ENCODE measurements at regions of chr11 and their contacts with region 1.

Region 1: DNA sequence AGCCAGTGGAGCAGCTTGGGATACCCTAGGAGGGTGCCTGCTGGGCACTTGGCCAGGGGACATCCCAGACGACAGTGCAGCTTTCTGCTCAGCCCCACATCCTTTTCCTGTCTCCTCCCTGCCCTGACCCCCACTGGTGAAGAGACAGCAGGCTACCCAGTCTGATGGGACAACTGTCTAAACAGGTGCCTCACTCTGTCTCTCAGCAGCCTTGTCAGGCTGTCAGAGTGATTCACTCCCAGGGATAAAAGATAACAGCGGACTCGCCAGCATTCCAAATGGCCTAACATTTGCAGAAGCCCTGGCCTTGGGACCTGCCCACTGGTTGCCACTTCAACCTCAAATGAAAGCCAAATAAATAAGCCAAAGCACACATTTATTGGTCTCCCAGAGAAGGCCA is 318.6 kb upstream of the PLET1 start:
- DNase-seq: no peak
- H3K4me3 ChIP-seq: no peak overlapping the region
- H3K4me3 Mint-ChIP-seq: no peak overlapping the region
- H3K27ac Mint-ChIP-seq: no peak overlapping the region
- H3K4me1 ChIP-seq: no peaks in the 10 kb centered on the region
- H3K4me1 Mint-ChIP-seq: no peaks in the 10 kb centered on the region
- H3K27me3 ChIP-seq: no peaks in the 10 kb centered on the region
- H3K27me3 Mint-ChIP-seq: peaks cover 11% of the 10 kb centered on the region
- CTCF ChIP-seq: no peak

Region 2: GRCh38 chr11:113974741-113975470 is 1395.6 kb after region 1 on chr11 and contains the start of gene HTR3A:
- CTCF ChIA-PET with region 1: no interaction called
- POLR2A ChIA-PET with region 1: interaction called, 14 read pairs
- intact Hi-C with region 1: no loop called
- DNase-seq: peak in 1 of 2 experiments; percentile 27
- H3K4me3 ChIP-seq: no peak within 1 kb of the TSS
- H3K4me3 Mint-ChIP-seq: no peak within 1 kb of the TSS
- H3K27ac Mint-ChIP-seq: no peak within 1 kb of the TSS
- H3K4me1 ChIP-seq: no peaks in the 10 kb centered on the region
- H3K4me1 Mint-ChIP-seq: no peaks in the 10 kb centered on the region
- H3K27me3 ChIP-seq: peaks cover 2% of the 10 kb centered on the region
- H3K27me3 Mint-ChIP-seq: peaks cover 27% of the 10 kb centered on the region
- CTCF ChIP-seq: no peak
- total RNA-seq, gene HTR3A: not detected in 2 replicates

Measured in Caco-2 (cell line).